ENCODE measurements at regions of chr13 and their contacts with region 1.

Region 1: DNA sequence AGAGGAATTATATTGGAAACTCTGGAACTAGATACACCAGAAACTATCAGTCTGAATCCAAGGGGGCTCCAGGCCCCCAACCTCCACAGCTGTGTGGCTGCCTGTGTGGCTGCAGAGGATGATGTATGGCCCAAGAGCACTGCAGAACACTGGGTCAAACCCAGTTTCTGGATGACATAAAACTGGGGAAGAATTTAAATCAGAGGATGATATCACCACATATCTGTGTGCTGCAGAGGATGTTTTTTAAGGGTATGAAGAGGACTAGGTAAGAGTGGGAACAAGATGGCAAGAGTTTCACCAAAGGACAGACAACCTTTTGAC is 226.4 kb downstream of the SUCLA2 start:
- DNase-seq: no peak
- H3K4me3 ChIP-seq: no peak overlapping the region
- H3K27ac ChIP-seq: no peak overlapping the region
- H3K4me1 ChIP-seq: no peaks in the 10 kb centered on the region
- H3K27me3 ChIP-seq: no peaks in the 10 kb centered on the region
- CTCF ChIP-seq: no peak

Region 2: DNA sequence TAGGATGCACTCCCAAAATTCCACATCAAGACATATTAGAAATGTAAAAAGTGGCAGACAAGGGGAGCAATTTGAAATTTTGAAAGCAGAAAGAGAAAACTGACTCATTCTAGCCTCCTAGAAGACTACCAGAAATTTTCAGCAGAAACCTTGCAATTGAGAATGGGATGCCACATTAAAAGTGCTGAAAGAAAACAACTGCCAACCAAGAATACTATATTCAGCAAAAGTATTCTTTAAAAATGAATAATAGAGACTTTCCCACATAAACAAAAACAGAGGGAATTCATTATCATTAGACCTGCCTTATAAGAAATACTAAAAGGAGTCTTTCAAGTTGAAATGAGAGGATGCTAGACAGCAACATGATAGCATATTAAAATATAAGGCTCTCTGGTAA is 799.5 kb before region 1 on chr13:
- intact Hi-C with region 1: loop called (anchors 10 kb)
- DNase-seq: no peak
- H3K4me3 ChIP-seq: no peak overlapping the region
- H3K27ac ChIP-seq: no peak overlapping the region
- H3K4me1 ChIP-seq: no peaks in the 10 kb centered on the region
- H3K27me3 ChIP-seq: no peaks in the 10 kb centered on the region
- CTCF ChIP-seq: no peak